Naive thymus-derived CD4-positive, alpha-beta T cell (primary cell): ENCODE measurements at regions of chr1 and their contacts with region 1.

Region 1: DNA sequence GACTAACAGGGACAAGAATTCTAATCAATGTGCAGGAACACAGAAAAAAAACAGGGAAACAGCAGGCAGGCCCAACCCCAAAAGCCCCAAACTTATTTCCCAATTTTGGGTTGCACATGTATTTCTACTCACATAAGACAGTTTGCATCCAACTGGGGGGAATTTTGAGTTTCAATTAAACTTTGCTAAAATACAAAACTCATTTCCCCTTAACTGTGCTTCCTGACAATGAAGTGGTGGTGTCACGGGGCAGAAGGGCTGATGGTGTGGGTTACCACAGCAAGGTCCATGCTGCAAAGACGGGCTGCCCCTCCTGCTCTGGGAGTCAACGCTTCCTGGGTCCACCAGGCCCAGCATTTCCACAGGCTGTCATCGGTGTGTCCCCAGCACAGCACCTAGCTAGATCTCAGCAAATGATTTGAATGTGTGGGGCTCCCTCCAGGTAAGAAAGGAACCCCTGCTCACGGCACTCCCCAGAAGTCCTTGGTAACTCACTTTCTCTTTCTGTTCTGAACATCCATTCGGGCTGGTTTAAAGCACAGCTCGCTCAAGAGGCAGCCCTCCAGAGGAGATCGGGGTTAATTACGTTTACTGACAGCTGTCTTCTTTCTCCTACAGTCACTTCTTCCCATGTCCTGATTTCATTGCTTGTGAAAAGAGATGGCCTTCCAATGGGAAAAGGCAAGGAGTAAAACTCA is 27.4 kb downstream of the HIVEP3 start:
- DNase-seq: peak; percentile 37 to 80 (median 75)
- ATAC-seq: peak; percentile 94
- H3K4me3 ChIP-seq: peak overlapping the region; percentile 60
- H3K4me3 Mint-ChIP-seq: peak overlapping the region; percentile 77 to 93 (median 84)
- H3K27ac ChIP-seq: peak overlapping the region; percentile 68
- H3K27ac Mint-ChIP-seq: peak overlapping the region; percentile 84 to 94 (median 92)
- H3K4me1 ChIP-seq: peaks cover 17 to 45% of the 10 kb centered on the region in 2 donors
- H3K4me1 Mint-ChIP-seq: peaks cover 23 to 64% (median 36%) of the 10 kb centered on the region in 7 donors
- H3K27me3 ChIP-seq: no peaks in the 10 kb centered on the region
- H3K27me3 Mint-ChIP-seq: peaks cover 0 to 2% (median 0%) of the 10 kb centered on the region in 5 donors

Region 2: GRCh38 chr1:41662061-41662764 is 229.1 kb before region 1 on chr1:
- CTCF ChIA-PET with region 1: interaction called, 4 read pairs
- POLR2A ChIA-PET with region 1: no interaction called
- intact Hi-C with region 1: loop called (anchors 5 to 10 kb)
- DNase-seq: peak; percentile 47 to 82 (median 60)
- ATAC-seq: peak; percentile 88
- H3K4me3 ChIP-seq: peak overlapping the region; percentile 60
- H3K4me3 Mint-ChIP-seq: peak overlapping the region in 6 of 10 donors; percentile 13 to 93 (median 70)
- H3K27ac ChIP-seq: peak overlapping the region; percentile 61
- H3K27ac Mint-ChIP-seq: peak overlapping the region in 2 of 9 donors; percentile 56 to 84
- H3K4me1 ChIP-seq: peaks cover 25 to 51% of the 10 kb centered on the region in 2 donors
- H3K4me1 Mint-ChIP-seq: peaks cover 42 to 80% (median 66%) of the 10 kb centered on the region in 7 donors
- H3K27me3 ChIP-seq: no peaks in the 10 kb centered on the region
- H3K27me3 Mint-ChIP-seq: no peaks in the 10 kb centered on the region

Region 3: DNA sequence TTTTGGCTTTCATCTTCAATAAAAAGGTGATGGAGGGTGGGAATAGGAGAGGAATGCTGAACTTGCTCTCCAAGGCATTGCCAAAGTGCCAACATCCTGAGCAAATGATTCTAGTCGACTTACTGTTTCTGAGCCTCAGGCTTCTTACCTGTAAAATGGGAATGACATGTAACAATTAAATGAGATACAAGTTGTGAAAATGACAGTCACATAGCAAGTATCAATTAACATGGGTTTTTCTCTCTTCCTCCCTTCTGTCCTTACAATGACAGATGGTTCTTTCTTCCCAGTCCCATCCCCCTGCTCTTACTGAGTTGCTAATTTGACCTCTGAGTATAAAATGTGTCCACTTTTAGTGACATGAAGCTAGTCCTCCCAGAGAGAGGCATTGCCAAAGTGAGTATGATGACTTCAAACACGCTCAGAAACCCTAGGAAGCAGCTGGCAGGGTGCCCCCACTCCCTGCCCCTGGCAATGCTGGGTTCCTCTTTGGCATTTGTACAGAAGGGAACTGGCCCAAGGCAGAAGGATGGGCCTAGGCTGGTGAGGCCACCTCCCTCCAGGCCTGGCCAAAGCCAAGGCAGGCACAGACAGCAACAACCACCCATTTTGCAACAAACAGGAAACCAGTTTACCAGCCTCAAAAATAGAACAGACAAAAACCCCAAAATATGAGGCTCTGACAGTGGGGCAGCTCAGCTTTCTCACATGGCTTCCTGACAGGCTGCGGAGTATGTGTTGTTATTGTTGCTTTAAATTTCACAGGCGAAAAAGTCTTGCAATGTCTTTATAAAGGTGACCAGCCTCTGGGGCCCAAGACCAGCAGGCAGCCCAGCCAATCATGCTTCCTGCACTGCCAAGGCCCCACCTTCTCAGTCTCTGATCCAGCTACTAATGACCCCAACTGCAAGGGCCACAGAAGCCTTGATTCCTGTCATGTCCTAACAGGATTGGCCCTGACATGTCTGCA is 88.5 kb before region 1 on chr1:
- CTCF ChIA-PET with region 1: no interaction called
- POLR2A ChIA-PET with region 1: no interaction called
- intact Hi-C with region 1: loop called in 1 of 2 experiments (anchors 5 kb)
- DNase-seq: peak in 7 of 9 donors; percentile 26 to 51 (median 48)
- ATAC-seq: peak; percentile 85
- H3K4me3 ChIP-seq: peak overlapping the region; percentile 32
- H3K4me3 Mint-ChIP-seq: peak overlapping the region; percentile 6 to 77 (median 62)
- H3K27ac ChIP-seq: peak overlapping the region; percentile 7
- H3K27ac Mint-ChIP-seq: peak overlapping the region; percentile 54 to 92 (median 87)
- H3K4me1 ChIP-seq: peaks cover 50 to 82% of the 10 kb centered on the region in 2 donors
- H3K4me1 Mint-ChIP-seq: peaks cover 59 to 84% (median 73%) of the 10 kb centered on the region in 7 donors
- H3K27me3 ChIP-seq: no peaks in the 10 kb centered on the region
- H3K27me3 Mint-ChIP-seq: no peaks in the 10 kb centered on the region

Region 4: DNA sequence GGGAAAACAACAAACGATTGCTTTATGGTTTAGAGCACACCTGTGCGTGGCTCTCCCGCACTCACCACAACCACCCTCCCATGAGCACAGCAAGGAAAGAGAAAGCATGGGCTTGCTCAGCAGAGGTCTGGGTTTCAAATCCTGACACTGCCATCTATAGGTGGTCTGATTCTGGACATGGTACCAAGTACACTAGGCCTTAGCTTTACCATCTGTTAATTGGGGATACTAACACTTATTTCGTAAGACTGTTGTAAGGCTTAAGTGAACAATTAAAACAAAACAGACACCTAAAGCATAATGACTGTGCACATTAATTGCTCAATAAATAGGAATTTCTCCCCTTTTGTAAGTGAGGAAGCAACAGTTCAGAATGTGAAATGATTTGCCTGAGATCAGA is 22.7 kb before region 1 on chr1:
- CTCF ChIA-PET with region 1: interaction called, 3 read pairs
- POLR2A ChIA-PET with region 1: no interaction called
- intact Hi-C with region 1: loop called in 1 of 2 experiments (anchors 2 kb)
- DNase-seq: peak in 1 of 9 donors; percentile 50
- ATAC-seq: peak; percentile 70
- H3K4me3 ChIP-seq: no peak overlapping the region
- H3K4me3 Mint-ChIP-seq: peak overlapping the region in 1 of 10 donors; percentile 44
- H3K27ac ChIP-seq: no peak overlapping the region
- H3K27ac Mint-ChIP-seq: peak overlapping the region in 1 of 9 donors; percentile 5
- H3K4me1 ChIP-seq: peaks cover 0 to 4% of the 10 kb centered on the region in 2 donors
- H3K4me1 Mint-ChIP-seq: peaks cover 4 to 23% (median 7%) of the 10 kb centered on the region in 7 donors
- H3K27me3 ChIP-seq: no peaks in the 10 kb centered on the region
- H3K27me3 Mint-ChIP-seq: no peaks in the 10 kb centered on the region

Region 5: DNA sequence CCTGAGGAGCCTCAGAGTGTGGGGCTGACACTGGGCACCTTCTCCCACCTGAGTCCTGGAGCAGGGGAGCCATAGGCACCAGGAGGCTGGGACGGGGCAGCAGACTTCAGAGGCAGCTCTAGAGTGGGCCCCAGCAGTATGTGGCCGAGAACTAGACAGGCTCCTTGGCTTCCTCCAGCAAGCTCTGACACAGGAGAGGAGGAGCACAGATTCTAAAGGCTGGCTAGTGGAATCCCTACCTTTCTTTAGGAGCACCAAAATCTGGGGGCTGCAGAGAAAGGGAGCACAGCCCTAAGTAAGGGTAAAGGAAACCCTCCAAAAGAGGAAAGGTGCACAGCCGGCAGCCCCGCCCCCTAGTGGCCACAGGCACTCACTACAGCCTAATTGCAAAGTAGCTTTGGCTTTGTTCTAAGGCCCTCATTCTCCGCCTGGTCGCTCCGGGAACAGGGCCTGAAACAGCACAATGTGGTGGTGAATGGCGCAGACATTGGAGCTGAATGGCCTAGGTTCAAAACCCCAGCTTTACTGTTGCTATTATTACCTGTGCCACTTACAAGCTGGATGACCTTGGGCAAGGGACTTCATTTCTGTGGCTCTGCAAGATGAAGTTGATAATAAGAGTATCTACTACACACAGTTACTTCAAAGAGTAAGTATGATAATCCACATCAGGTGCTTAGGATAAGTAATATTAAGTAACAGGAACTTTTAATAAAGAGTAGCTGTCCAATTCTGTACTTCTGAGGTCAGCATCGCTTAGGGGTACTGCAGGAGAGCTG is 282.0 kb after region 1 on chr1:
- CTCF ChIA-PET with region 1: no interaction called
- POLR2A ChIA-PET with region 1: no interaction called
- intact Hi-C with region 1: loop called in 1 of 2 experiments (anchors 5 kb)
- DNase-seq: peak; percentile 28 to 76 (median 57)
- ATAC-seq: peak; percentile 85
- H3K4me3 ChIP-seq: no peak overlapping the region
- H3K4me3 Mint-ChIP-seq: no peak overlapping the region
- H3K27ac ChIP-seq: no peak overlapping the region
- H3K27ac Mint-ChIP-seq: peak overlapping the region in 2 of 9 donors; percentile 17 to 71
- H3K4me1 ChIP-seq: no peaks in the 10 kb centered on the region
- H3K4me1 Mint-ChIP-seq: peaks cover 0 to 3% (median 0%) of the 10 kb centered on the region in 7 donors
- H3K27me3 ChIP-seq: no peaks in the 10 kb centered on the region
- H3K27me3 Mint-ChIP-seq: no peaks in the 10 kb centered on the region